Activated T-helper 1 cell treated with anti-CD3 and anti-CD28 coated beads, Interleukin-12 subunit alpha, Interleukin-12 subunit beta, Interleukin-2, Interleukin-4 antibody, amounts not matched to agents 30 ng/mL and 10 ng/mL and 1 ng/mL, durations not matched to agents 14 hours and 24 hours and 36 hours (primary cell): ENCODE measurements at regions of chr18 and their contacts with region 1.

Region 1: DNA sequence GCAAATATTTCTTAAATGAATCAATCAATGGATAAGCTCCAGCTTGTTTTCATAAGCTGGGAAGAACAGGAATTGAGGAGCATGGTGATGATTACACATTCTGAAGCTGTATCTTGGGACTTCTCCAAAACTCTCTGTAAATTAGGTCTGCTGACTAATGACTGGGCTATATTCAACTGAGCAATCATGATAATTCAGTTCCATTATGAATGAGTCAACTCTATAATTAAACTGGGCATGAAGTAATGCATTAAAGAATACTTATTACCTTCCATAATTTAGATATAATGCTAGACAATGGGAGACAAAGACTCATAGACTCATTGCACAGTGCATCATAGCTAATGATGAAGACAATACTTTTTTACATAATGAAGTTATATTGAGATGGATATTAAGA is 207.4 kb downstream of the CBLN2 start:
- DNase-seq: no peak
- H3K4me3 Mint-ChIP-seq: no peak overlapping the region
- H3K27ac Mint-ChIP-seq: no peak overlapping the region
- H3K4me1 Mint-ChIP-seq: no peaks in the 10 kb centered on the region
- H3K27me3 Mint-ChIP-seq: no peaks in the 10 kb centered on the region

Region 2: DNA sequence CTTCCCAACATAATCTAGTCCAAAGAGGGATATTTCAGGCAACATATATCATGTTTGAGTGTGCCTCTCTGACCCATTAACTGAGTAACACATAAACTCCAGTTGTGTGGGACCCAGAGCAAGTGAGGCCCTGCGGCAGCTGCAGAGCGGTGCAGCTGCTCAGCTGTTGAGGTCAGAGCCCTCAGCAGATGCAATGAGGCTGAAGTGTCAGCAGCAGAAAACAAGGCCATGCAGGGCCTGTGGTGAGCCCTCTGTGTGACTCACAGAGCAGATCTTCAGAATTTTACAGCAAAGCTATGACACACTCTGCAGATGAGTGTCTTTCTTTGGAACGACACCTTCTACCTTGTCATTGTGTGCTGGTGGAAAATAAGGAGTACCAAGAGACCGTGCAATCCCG is 38.8 kb after region 1 on chr18:
- intact Hi-C with region 1: loop called (anchors 10 kb)
- DNase-seq: no peak
- H3K4me3 Mint-ChIP-seq: no peak overlapping the region
- H3K27ac Mint-ChIP-seq: no peak overlapping the region
- H3K4me1 Mint-ChIP-seq: no peaks in the 10 kb centered on the region
- H3K27me3 Mint-ChIP-seq: no peaks in the 10 kb centered on the region